Left cardiac atrium (tissue), 4 donors: ENCODE measurements at regions of chr5 and their contacts with region 1.

Region 1: GRCh38 chr5:107476783-107477182 is 194.0 kb downstream of the EFNA5 start:
- DNase-seq: no peak
- ATAC-seq: peak; percentile 42 to 66

Region 2: GRCh38 chr5:107322936-107323335 is 153.8 kb before region 1 on chr5:
- intact Hi-C with region 1: no loop called
- DNase-seq: no peak
- ATAC-seq: no peak

Region 3: GRCh38 chr5:107557051-107557658 is 80.4 kb after region 1 on chr5:
- intact Hi-C with region 1: loop called in 1 of 2 experiments (anchors 10 kb)
- DNase-seq: peak; percentile 46
- ATAC-seq: peak; percentile 80 to 86